ENCODE measurements at regions of chr20 and their contacts with region 1.

Region 1: GRCh38 chr20:44532259-44532980 is 10.6 kb upstream of the SERINC3 start:
- DNase-seq: no peak
- H3K4me3 ChIP-seq: peak overlapping the region; percentile 62 to 86 (median 69)
- H3K27ac ChIP-seq: peak overlapping the region; percentile 79 to 87 (median 82)
- H3K4me1 ChIP-seq: peaks cover 3 to 49% (median 47%) of the 10 kb centered on the region in 4 donors
- H3K27me3 ChIP-seq: no peaks in the 10 kb centered on the region
- CTCF ChIP-seq: no peak
- EP300 ChIP-seq: no peak
- POLR2A ChIP-seq: no peak

Region 2: DNA sequence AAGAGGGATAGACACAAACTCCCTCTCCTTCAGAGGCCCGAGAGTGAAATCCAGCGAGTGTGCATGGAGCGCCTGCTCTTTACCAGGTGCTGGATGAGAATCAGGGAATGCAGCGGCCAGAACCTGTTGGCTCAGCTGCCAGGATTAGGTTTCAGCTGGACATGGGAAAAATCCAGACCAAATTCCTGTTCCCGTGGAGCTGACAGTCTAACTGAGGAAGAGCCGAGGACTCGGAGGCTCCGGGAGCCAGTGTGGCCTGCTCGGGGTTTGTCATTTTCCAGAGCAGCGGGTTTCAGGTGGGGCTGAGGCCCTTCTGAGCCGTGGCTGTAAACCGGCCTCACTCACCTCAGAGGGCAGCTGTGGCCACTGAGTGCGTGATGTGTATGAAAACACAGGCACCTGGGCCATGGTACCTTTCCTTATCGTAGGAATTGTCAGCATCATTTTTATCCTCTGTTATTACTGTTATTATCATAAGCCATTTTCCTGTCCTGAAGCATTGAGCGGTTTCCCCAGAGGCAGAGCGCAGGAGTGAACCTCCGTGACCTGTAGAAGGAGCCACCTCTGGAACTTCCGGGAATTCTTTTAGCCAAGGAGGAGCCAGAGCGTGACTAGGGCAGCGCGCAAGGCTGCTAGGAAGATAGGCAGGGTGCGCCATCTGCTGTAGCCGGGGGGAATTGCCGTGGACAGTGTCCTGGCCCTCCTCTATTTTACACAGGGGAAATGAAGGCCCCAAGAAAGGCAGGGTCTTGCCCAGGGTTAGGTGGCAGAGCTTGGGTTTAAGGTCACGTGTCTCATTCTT is 77.3 kb after region 1 on chr20:
- in situ Hi-C with region 1: loop called in 2 of 4 experiments (anchors 10 kb)
- intact Hi-C with region 1: loop called (anchors 1 kb)
- DNase-seq: peak; percentile 93
- H3K4me3 ChIP-seq: peak overlapping the region in 1 of 4 donors; percentile 29
- H3K27ac ChIP-seq: peak overlapping the region; percentile 82 to 90 (median 86)
- H3K4me1 ChIP-seq: peaks cover 10 to 34% (median 13%) of the 10 kb centered on the region in 4 donors
- H3K27me3 ChIP-seq: no peaks in the 10 kb centered on the region
- CTCF ChIP-seq: peak; percentile 96 to 98 (median 97)
- EP300 ChIP-seq: no peak
- POLR2A ChIP-seq: no peak

Region 3: GRCh38 chr20:44738813-44739477 is 206.5 kb after region 1 on chr20:
- in situ Hi-C with region 1: no loop called
- intact Hi-C with region 1: loop called (anchors 5 kb)
- DNase-seq: peak; percentile 42
- H3K4me3 ChIP-seq: no peak overlapping the region
- H3K27ac ChIP-seq: no peak overlapping the region
- H3K4me1 ChIP-seq: no peaks in the 10 kb centered on the region
- H3K27me3 ChIP-seq: peaks cover 6% of the 10 kb centered on the region
- CTCF ChIP-seq: no peak
- EP300 ChIP-seq: no peak
- POLR2A ChIP-seq: no peak

Measured in transverse colon (tissue), 4 donors.